H1 (cell line): ENCODE measurements at regions of chr3 and their contacts with region 1.

Region 1: GRCh38 chr3:56484122-56484521 is 15.9 kb upstream of the ERC2 start:
- DNase-seq: no peak
- H3K4me3 ChIP-seq: no peak overlapping the region
- H3K27ac ChIP-seq: no peak overlapping the region
- H3K4me1 ChIP-seq: no peaks in the 10 kb centered on the region
- H3K27me3 ChIP-seq: no peaks in the 10 kb centered on the region
- CTCF ChIP-seq: no peak
- EP300 ChIP-seq: no peak
- POLR2A ChIP-seq: no peak
- RAD21 ChIP-seq: no peak

Region 2: GRCh38 chr3:56456117-56456516 is 28.0 kb before region 1 on chr3:
- CTCF ChIA-PET with region 1: no interaction called
- POLR2A ChIA-PET with region 1: no interaction called
- DNase-seq: no peak
- H3K4me3 ChIP-seq: no peak overlapping the region
- H3K27ac ChIP-seq: no peak overlapping the region
- H3K4me1 ChIP-seq: peaks cover 0 to 8% (median 2%) of the 10 kb centered on the region in 4 experiments; a peak in 2 of 7 replicates
- H3K27me3 ChIP-seq: no peaks in the 10 kb centered on the region
- CTCF ChIP-seq: no peak
- EP300 ChIP-seq: no peak
- POLR2A ChIP-seq: no peak
- RAD21 ChIP-seq: no peak

Region 3: DNA sequence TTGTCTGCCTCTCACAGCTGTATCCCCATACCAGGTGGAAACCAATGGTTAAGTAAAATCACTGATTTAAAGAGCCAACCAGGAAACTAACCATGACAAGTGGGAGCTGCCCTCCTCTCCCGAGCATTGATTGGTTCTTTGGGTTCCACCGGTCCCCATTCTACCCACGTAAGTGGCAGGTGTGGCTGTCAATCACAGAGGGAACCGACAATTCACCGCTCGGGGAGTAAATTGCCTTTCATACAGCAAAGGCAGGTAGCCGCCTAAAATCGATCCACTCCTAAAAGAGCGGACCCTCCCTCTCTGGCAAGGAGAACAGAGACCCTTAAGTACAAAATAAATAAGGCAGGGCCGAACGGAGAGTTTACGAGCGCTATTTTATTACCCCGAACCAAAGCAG is 17.0 kb before region 1 on chr3:
- CTCF ChIA-PET with region 1: interaction called, 13 read pairs
- POLR2A ChIA-PET with region 1: no interaction called
- DNase-seq: peak; percentile 80 to 83
- H3K4me3 ChIP-seq: peak overlapping the region; percentile 73 to 97 (median 77)
- H3K27ac ChIP-seq: no peak overlapping the region
- H3K4me1 ChIP-seq: peaks cover 0 to 4% (median 2%) of the 10 kb centered on the region in 4 experiments; a peak in 3 of 7 replicates
- H3K27me3 ChIP-seq: no peaks in the 10 kb centered on the region
- CTCF ChIP-seq: no peak
- EP300 ChIP-seq: no peak
- POLR2A ChIP-seq: no peak
- RAD21 ChIP-seq: no peak